Activated CD4-positive, alpha-beta T cell treated with anti-CD3 and anti-CD28 coated beads, Interleukin-2, amount 10 ng/mL, durations not matched to agents 24 days and 14 days (primary cell): ENCODE measurements at regions of chr11 and their contacts with region 1.

Region 1: DNA sequence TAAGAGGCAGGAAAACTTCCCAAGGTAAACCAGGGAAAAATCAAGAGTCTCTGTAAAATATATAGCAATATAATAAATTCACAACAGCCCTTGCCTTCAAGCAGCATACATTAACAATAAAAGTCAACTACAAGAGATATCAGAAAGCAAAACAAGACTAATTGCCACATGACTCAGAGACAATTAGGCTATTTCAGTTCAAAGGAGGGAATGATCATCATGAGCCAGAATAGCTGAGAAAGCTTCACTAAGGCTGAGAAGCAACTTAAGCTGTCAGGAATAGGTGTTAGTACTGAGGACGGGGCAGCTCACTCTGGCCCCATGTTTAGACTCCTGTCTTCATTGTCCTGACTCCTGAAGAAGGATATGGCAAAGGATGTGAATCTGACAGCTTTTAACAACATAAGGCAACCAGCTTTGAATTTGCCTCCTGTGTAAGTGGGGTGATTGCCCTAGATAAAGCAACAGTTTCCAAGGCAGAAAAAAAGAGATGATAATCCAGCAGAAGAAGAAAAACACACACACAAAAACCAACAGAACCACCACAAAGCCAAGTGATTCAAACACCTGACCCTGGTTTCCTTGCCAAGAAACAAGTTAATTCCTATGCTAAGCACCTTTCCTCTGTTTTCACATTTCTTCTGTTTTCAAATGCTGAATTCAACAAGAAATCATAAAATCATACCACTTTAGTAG is 60.8 kb downstream of the SIK3 start:
- DNase-seq: peak; percentile 61
- H3K4me3 Mint-ChIP-seq: no peak overlapping the region
- H3K27ac Mint-ChIP-seq: peak overlapping the region; percentile 49
- H3K4me1 Mint-ChIP-seq: peaks cover 40% of the 10 kb centered on the region
- H3K27me3 Mint-ChIP-seq: no peaks in the 10 kb centered on the region

Region 2: DNA sequence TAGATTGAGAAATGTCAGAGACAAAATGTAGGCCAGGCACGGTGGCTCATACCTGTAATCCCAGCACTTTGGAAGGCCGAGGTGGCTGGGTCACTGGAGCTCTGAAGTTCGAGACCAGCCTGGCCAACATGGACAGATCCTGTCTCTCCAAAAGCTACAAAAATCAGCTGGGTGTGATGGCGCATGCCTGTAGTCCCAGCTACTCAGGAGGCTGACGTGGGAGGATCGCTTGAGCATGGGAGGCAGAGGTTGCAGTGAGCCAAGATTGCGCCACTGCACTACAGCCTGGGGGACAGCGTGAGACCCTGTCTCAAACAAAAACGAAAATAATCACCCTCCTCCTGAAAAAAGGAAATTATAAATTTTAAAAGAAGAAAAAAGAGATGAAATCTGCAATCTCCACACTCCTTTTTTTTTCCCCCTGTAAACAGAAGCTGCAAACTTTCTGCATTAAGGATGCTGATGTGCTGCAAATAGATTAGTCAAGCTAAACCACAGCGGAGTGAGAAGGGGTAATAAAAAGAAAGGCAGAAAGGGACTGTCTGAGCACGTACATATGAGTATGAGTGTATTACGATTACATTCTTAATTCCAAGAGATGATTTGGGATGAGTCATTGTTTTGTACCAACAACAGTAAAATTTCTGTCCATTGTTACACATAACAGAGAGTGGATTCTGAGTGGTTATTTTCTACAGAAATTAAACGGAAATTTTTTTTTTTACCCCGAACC is 26.5 kb before region 1 on chr11:
- intact Hi-C with region 1: loop called (anchors 2 kb)
- DNase-seq: no peak
- H3K4me3 Mint-ChIP-seq: no peak overlapping the region
- H3K27ac Mint-ChIP-seq: peak overlapping the region; percentile 80
- H3K4me1 Mint-ChIP-seq: peaks cover 30% of the 10 kb centered on the region
- H3K27me3 Mint-ChIP-seq: no peaks in the 10 kb centered on the region